Activated CD8-positive, alpha-beta T cell treated with anti-CD3 and anti-CD28 coated beads, Interleukin-2, amount 10 ng/mL, durations not matched to agents 7 days and 5 days (primary cell): ENCODE measurements at regions of chr14 and their contacts with region 1.

Region 1: DNA sequence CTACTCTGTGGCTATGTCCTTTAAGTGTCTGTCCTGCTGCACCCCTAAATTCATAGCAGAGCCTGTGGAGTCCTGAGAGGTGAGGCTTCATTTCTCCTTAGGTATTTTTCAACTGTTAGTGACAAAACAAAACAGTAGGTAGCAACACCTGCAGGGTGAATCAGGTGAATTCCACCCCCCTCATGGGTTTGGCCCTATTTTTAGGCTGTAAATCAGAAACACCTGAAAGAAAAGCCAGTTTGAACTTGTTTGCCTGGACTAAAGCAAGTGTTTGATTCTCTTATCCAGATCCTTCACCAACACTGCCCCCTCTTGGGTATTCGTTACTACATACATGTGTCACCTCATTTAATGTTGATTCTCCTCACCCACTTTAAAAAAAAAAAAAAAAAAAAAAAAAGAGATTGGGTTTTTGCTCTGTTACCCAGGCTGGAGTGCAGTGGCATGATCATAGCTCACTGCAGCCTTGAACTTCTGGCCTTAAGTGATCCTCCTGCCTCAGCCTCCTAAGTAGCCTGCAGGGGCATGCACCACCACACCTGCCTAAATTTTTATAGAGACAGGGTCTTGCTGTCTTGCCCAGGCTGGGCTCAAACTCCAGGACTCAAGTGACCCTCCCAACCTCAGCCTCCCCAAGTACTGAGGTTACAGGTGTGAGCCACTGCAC is 10.3 kb downstream of the TBPL2 start:
- DNase-seq: peak; percentile 71
- ATAC-seq: peak; percentile 77
- H3K4me3 Mint-ChIP-seq: no peak overlapping the region
- H3K27ac Mint-ChIP-seq: no peak overlapping the region
- H3K4me1 Mint-ChIP-seq: peaks cover 21% of the 10 kb centered on the region
- H3K27me3 Mint-ChIP-seq: no peaks in the 10 kb centered on the region

Region 2: DNA sequence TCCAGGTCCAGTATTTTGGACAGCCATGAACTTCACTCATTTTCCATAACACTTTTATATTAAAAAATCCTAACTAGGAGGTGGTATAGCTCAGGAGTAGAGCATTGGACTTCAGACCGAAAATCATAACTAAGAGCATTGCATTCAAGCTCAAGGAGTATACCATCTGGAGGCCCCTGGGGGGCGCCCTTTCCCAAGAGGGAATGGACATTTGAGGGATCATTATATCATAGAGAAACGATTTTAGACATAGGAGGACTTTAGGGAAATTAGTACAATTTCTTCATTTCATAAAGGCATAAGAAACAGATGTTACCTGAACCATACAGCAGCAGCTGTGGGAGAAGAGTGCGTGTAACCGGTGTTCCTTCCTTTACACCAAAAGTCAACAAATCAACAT is 13.3 kb before region 1 on chr14:
- CTCF ChIA-PET with region 1: interaction called, 25 read pairs
- POLR2A ChIA-PET with region 1: no interaction called
- DNase-seq: peak; percentile 35
- ATAC-seq: peak; percentile 57
- H3K4me3 Mint-ChIP-seq: no peak overlapping the region
- H3K27ac Mint-ChIP-seq: no peak overlapping the region
- H3K4me1 Mint-ChIP-seq: peaks cover 13% of the 10 kb centered on the region
- H3K27me3 Mint-ChIP-seq: peaks cover 5% of the 10 kb centered on the region

Region 3: GRCh38 chr14:55446218-55446654 is 16.1 kb after region 1 on chr14:
- CTCF ChIA-PET with region 1: interaction called, 58 read pairs
- POLR2A ChIA-PET with region 1: no interaction called
- DNase-seq: peak; percentile 71
- ATAC-seq: no peak
- H3K4me3 Mint-ChIP-seq: no peak overlapping the region
- H3K27ac Mint-ChIP-seq: no peak overlapping the region
- H3K4me1 Mint-ChIP-seq: no peaks in the 10 kb centered on the region
- H3K27me3 Mint-ChIP-seq: no peaks in the 10 kb centered on the region